Dorsolateral prefrontal cortex (tissue), 120 donors: ENCODE measurements at regions of chr11 and their contacts with region 1.

Region 1: DNA sequence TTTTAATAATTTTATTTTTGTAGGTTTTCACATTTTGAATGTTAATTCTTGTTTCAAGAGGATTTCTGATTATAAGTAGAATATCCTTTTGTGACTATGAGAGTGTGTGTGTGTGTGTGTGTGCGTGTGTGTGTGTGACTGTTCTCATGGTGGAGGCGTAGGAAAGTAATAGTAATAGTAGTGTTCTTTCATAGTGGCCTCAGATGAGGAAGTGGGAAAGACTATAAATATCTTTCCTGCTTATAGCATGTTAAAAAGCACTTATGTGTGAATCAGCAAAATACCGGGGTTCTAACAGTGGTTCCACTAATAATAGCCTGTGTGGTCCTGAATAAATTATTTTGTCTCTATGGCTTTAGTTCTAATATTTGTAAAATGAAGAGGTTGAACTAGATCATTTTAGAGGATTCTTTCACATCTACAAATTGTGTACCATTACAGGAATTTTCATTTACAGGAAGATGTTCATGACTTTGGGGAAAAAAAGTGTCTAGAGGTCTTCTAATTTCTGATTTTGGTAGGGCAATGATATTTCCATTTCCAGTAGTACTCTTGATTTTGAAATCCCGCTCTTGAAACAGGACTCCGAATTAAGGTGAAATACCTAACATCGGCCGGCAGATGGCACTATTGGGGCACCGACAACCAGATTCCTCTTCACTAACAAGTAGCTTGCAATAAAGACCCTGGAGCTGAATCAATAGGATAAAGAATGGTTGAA is 29.9 kb upstream of the OR10G7 start:
- DNase-seq: peak in 9 of 10 donors; percentile 32 to 80 (median 71)
- H3K4me3 ChIP-seq: peak overlapping the region in 27 of 59 donors; percentile 4 to 47 (median 26)
- H3K27ac ChIP-seq: no peak overlapping the region
- H3K27me3 ChIP-seq: peaks cover 0 to 43% (median 5%) of the 10 kb centered on the region in 45 donors
- CTCF ChIP-seq: peak; percentile 73 to 94 (median 86)

Region 2: DNA sequence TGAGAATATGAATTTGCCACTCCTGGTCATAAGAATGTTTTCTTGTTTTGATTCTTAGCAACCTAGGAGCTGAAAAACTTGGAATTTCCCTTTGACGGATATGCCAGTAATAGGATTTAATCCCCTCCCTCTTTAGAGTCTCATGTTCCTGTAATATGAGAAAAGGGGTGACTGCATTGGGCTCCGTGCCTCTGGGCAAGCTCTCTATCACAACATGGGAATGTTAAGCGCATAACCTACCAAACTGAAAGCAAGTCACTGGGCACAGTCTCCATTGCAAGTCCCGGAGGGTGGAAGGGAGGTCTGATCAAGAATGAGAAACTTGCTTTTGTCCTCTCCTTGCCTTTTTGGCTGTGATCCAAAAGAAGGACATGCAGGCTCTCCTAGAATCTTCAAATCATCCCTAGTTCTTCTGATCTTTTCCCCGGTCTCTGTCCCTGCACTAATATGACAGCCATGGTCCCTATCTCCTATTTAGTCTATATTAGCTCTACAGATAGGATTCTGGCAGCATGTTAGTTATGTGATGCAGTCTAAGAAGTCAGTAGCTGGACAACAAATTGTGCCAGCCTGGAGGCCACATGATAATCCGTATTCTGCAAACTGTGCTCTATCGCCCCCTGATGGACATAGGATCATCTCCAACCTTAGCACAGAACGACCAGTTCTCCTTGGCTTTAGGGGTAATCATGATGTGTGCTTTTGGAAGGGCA is 123.8 kb after region 1 on chr11:
- intact Hi-C with region 1: loop called (anchors 5 to 10 kb)
- DNase-seq: no peak
- H3K4me3 ChIP-seq: no peak overlapping the region
- H3K27ac ChIP-seq: peak overlapping the region in 11 of 59 donors; percentile 0 to 52 (median 16)
- H3K27me3 ChIP-seq: no peaks in the 10 kb centered on the region
- CTCF ChIP-seq: peak in 43 of 56 donors; percentile 14 to 59 (median 35)

Region 3: DNA sequence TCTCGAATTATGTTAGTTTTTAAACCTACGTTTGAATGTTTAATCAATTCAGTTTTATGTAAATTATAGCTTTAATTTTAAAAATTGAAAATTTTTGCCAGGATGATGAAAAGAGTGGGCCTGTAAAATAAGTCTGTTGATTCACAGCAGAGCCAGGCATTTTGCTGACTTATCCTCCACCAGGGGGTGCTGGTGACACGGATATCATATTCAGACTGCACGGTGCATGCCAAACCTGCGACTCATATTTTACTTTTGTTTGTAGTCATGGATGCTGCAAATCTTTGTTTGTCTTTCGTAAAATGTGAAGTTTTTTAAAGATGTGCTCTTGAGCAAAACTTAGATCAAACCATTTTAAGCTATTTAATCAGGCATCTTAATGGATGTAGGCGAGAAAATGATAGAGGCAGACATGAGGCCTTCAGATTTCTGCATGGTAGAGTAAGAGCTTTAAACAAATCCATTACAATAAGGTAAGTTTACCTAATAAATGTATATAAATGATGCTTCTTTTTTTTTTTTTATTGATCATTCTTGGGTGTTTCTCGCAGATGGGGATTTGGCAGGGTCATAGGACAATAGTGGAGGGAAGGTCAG is 331.3 kb after region 1 on chr11:
- intact Hi-C with region 1: loop called in 1 of 2 experiments (anchors 10 kb)
- DNase-seq: peak; percentile 8 to 88 (median 63)
- H3K4me3 ChIP-seq: no peak overlapping the region
- H3K27ac ChIP-seq: no peak overlapping the region
- H3K27me3 ChIP-seq: peaks cover 0 to 4% (median 0%) of the 10 kb centered on the region in 45 donors
- CTCF ChIP-seq: peak; percentile 58 to 84 (median 72)